GM12878 (cell line): ENCODE measurements at regions of chr19 and their contacts with region 1.

Region 1: GRCh38 chr19:37906869-37907734 is at the start of gene SIPA1L3:
- DNase-seq: peak; percentile 83
- ATAC-seq: peak; percentile 92
- H3K4me3 ChIP-seq: peak within 1 kb of the TSS; percentile 98
- H3K27ac ChIP-seq: peak within 1 kb of the TSS; percentile 64
- H3K4me1 ChIP-seq: peaks cover 25% of the 10 kb centered on the region
- H3K27me3 ChIP-seq: no peaks in the 10 kb centered on the region
- CTCF ChIP-seq: no peak
- EP300 ChIP-seq: 0 out of 4 replicates have a peak, but pooled peaks of 1 of the 2 experiments have one; percentile 6
- POLR2A ChIP-seq: peak; percentile 79
- RAD21 ChIP-seq: no peak
- polyA plus RNA-seq, gene SIPA1L3: 0.24 to 0.63 TPM

Region 2: DNA sequence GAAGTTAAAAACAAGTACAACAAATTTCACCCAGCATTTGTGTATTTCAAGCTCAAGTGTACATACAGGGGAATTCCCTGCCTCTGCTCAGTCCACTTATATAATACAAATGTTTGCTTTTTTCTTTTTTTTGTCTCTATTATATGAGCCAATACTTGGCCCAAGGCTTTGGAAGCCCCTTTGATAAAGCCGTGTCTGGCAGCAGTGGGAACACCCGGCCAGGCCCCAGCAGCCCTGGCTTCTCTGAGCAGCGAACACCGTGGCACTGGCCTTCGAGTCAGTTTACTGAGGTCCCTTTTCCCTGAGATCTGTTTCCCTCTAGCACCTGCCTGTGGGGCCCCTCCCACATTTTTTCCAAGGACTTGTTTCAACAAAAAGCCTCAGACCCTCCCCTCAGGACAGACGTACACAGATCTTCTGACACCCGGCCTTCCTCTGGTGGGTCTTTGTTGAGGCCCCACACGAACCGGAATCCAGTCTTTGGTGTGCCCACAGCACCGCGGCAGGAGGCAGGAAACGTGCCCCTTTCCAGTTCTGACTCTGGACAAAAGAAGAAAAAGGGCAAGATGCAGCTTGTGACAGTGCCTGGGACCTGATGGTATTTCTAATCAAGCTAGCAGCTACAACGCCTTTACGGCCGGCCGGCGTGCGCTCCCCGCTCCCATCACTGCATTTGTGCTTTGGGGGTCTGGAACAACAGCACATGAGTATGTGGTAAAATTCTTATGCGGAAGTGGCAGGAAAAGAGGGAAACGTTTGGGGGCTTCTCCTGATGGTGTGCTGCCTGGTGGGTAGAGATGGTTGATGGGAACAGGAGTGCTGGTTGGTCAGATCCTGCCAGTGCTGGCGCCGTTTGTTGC is 13.7 kb after region 1 on chr19:
- CTCF ChIA-PET with region 1: interaction called, 6 read pairs
- POLR2A ChIA-PET with region 1: interaction called, 6 read pairs
- RAD21 ChIA-PET with region 1: interaction called, 22 read pairs
- SMC1A ChIA-PET with region 1: interaction called, 57 read pairs
- in situ Hi-C with region 1: no loop called
- intact Hi-C with region 1: no loop called
- DNase-seq: no peak
- ATAC-seq: peak; percentile 37
- H3K4me3 ChIP-seq: peak overlapping the region; percentile 31; the same call in 1 of the 2 replicates
- H3K27ac ChIP-seq: peak overlapping the region; percentile 92
- H3K4me1 ChIP-seq: peaks cover 50% of the 10 kb centered on the region
- H3K27me3 ChIP-seq: no peaks in the 10 kb centered on the region
- CTCF ChIP-seq: no peak
- EP300 ChIP-seq: no peak
- POLR2A ChIP-seq: no peak
- RAD21 ChIP-seq: no peak

Region 3: DNA sequence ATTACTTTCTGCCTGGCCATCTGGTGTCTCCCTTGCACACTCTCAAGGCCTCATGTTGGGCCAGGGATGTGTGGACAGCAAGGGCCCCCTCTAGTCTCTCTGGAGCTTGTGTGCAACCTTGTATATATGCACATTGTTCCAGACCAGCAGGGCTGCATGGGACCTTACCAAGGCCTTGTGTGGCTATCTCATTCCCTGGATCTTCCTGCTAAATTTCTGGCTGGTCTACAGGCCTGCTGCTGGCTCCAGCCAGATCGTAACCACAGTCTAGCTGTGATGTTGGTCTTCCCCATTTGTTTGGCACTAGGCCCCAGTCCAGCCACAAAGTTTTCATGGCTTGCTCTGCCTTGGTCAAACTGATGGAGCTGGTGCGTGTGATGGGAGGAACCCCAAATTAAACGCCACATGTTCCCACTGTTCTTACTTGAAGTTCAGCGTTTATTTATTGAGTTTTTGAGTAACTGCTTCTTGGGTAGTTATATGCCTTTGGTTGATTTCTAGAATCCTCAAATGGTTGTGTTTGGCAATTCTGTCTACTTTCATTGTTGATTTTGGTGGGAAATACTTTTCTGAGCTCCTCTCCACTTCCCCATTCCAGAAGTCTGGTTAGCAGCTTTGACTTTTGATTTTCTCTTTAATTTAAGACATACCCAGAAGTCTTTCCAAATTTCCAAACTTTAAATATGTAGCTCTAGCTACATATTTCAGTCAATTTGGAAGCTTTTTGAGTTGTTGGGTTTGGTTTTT is 56.3 kb after region 1 on chr19:
- CTCF ChIA-PET with region 1: interaction called, 7 read pairs
- POLR2A ChIA-PET with region 1: interaction called, 18 read pairs
- RAD21 ChIA-PET with region 1: interaction called, 10 read pairs
- SMC1A ChIA-PET with region 1: interaction called, 45 read pairs
- in situ Hi-C with region 1: no loop called
- intact Hi-C with region 1: no loop called
- DNase-seq: no peak
- ATAC-seq: peak; percentile 59
- H3K4me3 ChIP-seq: no peak overlapping the region
- H3K27ac ChIP-seq: peak overlapping the region; percentile 45
- H3K4me1 ChIP-seq: peaks cover 45% of the 10 kb centered on the region
- H3K27me3 ChIP-seq: no peaks in the 10 kb centered on the region
- CTCF ChIP-seq: peak in 1 of 3 experiments; percentile 9; a peak in 1 of 6 replicates
- EP300 ChIP-seq: no peak
- POLR2A ChIP-seq: no peak
- RAD21 ChIP-seq: no peak

Region 4: DNA sequence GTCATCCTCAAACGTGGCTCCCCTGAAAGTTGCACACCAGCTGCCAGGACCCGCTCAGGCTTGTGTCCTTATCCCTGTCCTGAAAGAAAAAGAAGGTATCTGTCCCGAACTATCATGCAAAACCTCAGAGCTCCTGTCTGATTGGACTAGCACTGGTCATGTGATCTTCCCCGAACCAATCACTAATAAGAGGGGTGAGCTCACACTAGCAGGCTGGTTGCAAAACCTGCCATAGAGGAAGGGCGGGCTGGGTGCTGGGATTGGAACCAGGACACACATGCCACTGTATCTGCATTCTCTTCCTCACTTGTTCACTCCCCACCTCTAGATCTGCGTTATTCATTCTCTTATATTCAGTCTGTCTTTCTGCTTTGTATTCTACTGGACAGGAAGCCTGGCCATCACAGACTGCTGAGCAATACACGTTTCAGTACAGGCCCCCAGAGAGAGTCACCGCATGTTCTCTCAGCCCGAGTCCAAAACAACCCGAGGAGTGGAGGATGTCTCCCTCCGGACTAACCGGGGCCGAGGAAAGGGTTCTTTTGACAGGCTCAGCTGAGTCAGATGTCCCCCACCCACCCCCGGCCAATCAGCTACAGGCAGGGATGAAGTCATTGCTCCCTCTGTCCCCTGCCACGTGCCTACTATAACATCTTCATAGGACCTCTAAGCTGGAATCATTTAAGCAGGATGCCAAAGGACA is 97.6 kb after region 1 on chr19:
- CTCF ChIA-PET with region 1: interaction called, 16 read pairs
- POLR2A ChIA-PET with region 1: interaction called, 34 read pairs
- RAD21 ChIA-PET with region 1: interaction called, 50 read pairs
- SMC1A ChIA-PET with region 1: interaction called, 58 read pairs
- in situ Hi-C with region 1: no loop called
- intact Hi-C with region 1: loop called (anchors 2 kb)
- DNase-seq: peak; percentile 95
- ATAC-seq: peak; percentile 87
- H3K4me3 ChIP-seq: peak overlapping the region; percentile 63
- H3K27ac ChIP-seq: peak overlapping the region; percentile 89
- H3K4me1 ChIP-seq: peaks cover 57% of the 10 kb centered on the region
- H3K27me3 ChIP-seq: no peaks in the 10 kb centered on the region
- CTCF ChIP-seq: no peak
- EP300 ChIP-seq: no peak
- POLR2A ChIP-seq: peak; percentile 80
- RAD21 ChIP-seq: no peak

Region 5: DNA sequence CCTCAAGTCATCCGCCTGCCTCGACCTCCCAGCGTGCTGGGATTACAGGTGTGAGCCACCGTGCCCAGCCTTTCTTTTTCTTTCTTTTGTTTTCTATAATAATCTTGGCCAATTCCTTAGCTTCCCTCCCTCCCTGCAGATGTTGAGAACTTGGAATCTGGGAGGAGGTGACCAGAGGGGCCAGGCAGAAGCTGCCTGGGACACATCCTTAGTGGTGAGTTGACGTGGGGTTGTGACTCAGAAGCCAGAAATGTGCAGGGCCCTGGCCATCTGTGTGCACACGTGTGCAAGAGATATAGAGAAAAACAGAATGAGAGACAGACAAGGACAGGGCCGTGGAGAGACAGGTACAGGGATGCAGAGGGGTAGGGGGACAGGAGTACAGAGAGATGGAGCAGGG is 154.2 kb after region 1 on chr19:
- CTCF ChIA-PET with region 1: interaction called, 14 read pairs
- POLR2A ChIA-PET with region 1: no interaction called
- RAD21 ChIA-PET with region 1: interaction called, 16 read pairs
- SMC1A ChIA-PET with region 1: interaction called, 18 read pairs
- in situ Hi-C with region 1: no loop called
- intact Hi-C with region 1: no loop called
- DNase-seq: no peak
- ATAC-seq: no peak
- H3K4me3 ChIP-seq: no peak overlapping the region
- H3K27ac ChIP-seq: no peak overlapping the region
- H3K4me1 ChIP-seq: peaks cover 29% of the 10 kb centered on the region
- H3K27me3 ChIP-seq: no peaks in the 10 kb centered on the region
- CTCF ChIP-seq: no peak
- EP300 ChIP-seq: no peak
- POLR2A ChIP-seq: no peak
- RAD21 ChIP-seq: no peak

Region 6: DNA sequence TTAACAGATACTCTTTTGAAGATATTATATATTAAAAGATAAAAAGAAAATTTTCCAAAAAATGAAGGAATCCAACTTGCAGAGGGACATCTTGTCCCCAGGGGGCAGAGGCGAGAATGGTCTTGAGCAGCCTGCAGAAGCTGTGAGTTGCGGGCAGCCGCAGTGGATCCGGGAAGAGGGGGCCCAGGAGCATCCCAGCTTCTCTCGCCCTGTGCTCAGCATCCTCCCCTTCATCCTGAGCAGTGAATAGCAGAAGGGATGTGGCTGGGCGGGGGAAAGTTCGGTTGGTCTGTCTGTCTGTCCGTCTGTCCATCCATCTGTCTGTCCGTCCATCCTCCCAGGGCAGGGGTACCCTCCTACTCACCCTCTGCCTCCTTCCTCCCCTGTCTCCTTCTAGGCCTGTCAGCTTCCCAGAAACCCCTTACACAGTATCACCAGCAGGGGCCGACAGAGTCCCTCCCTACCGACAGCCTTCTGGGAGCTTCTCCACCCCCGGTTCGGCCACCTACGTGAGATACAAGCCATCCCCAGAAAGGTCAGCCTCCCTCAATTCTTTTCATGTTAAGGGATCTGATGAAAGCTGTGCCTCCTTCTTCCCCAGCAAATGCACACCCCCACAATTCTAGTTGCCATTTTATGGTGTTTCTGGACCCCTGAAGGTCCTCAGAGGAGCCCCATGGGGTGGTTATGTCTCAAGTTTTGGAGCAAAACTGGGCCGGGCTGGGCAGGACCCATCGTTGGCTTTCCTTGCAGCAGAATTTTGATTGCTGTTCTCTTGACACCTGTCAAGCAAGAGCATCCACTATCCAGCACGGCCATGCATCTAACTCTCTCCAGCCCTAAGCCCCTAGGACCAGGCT is 235.3 kb after region 1 on chr19:
- CTCF ChIA-PET with region 1: interaction called, 35 read pairs
- POLR2A ChIA-PET with region 1: no interaction called
- RAD21 ChIA-PET with region 1: interaction called, 8 read pairs
- SMC1A ChIA-PET with region 1: interaction called, 17 read pairs
- in situ Hi-C with region 1: no loop called
- intact Hi-C with region 1: loop called (anchors 5 kb)
- DNase-seq: no peak
- ATAC-seq: peak; percentile 83
- H3K4me3 ChIP-seq: no peak overlapping the region
- H3K27ac ChIP-seq: no peak overlapping the region
- H3K4me1 ChIP-seq: no peaks in the 10 kb centered on the region
- H3K27me3 ChIP-seq: no peaks in the 10 kb centered on the region
- CTCF ChIP-seq: peak; percentile 54 to 77 (median 67)
- EP300 ChIP-seq: no peak
- POLR2A ChIP-seq: 0 out of 2 replicates have a peak, but pooled peaks have one; percentile 15
- RAD21 ChIP-seq: peak; percentile 54

Region 7: GRCh38 chr19:38229585-38230073 is 322.5 kb after region 1 on chr19:
- CTCF ChIA-PET with region 1: interaction called, 80 read pairs
- POLR2A ChIA-PET with region 1: interaction called, 4 read pairs
- RAD21 ChIA-PET with region 1: interaction called, 16 read pairs
- SMC1A ChIA-PET with region 1: interaction called, 16 read pairs
- in situ Hi-C with region 1: loop called (anchors 5 kb)
- intact Hi-C with region 1: no loop called
- DNase-seq: no peak
- ATAC-seq: peak; percentile 92
- H3K4me3 ChIP-seq: no peak overlapping the region
- H3K27ac ChIP-seq: no peak overlapping the region
- H3K4me1 ChIP-seq: 0 out of 2 replicates have a peak, but pooled peaks cover under 1% of the 10 kb centered on the region
- H3K27me3 ChIP-seq: peaks cover 6 to 8% of the 10 kb centered on the region in 2 experiments; a peak in 3 of 4 replicates
- CTCF ChIP-seq: no peak
- EP300 ChIP-seq: no peak
- POLR2A ChIP-seq: no peak
- RAD21 ChIP-seq: no peak